Astrocyte of the cerebellum (primary cell): ENCODE measurements at regions of chr16 and their contacts with region 1.

Region 1: GRCh38 chr16:24820522-24820921 is 25.2 kb upstream of the SLC5A11 start:
- DNase-seq: no peak
- H3K4me3 ChIP-seq: no peak overlapping the region
- CTCF ChIP-seq: no peak

Region 2: DNA sequence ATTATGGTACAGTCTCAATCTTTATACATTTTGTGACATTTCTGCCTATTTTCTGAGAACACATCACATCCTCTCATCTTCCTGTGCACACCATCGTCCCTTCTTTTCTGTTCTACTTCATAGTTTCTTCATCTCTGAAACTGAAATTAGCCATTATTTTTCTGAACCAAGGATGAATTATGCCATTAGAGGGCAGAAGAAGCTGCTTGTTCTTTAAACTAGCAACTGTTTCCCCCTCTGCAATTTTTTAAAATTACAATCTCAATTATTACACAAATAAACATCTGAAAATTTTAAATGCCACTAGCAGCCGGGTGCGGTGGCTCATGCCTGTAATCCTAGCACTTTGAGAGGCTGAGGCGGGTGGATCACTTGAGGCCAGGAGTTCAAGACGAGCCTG is 239.9 kb before region 1 on chr16:
- in situ Hi-C with region 1: no loop called
- DNase-seq: peak; percentile 8
- H3K4me3 ChIP-seq: no peak overlapping the region
- CTCF ChIP-seq: peak; percentile 40

Region 3: DNA sequence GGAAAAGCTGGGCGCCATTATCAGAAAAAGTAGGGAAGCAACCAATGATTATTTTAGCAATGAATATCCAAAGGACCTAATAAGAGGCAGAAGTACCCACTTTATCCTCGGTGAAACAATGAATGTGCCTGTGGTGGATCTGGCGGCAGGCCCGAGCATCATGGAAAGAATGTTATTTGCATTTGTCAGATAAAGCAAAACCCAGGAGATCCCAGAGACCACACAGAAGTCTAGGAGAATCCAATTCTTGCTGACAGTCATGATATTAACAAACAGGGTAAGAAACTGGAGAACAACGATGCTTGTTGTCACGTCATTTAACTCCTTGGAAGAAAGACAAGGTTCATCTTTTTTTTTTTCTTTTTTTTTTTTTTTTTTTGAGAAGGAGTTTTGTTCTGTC is 103.1 kb before region 1 on chr16:
- in situ Hi-C with region 1: no loop called
- DNase-seq: peak; percentile 53
- H3K4me3 ChIP-seq: no peak overlapping the region
- CTCF ChIP-seq: no peak

Region 4: GRCh38 chr16:24896439-24896838 is 75.9 kb after region 1 on chr16:
- in situ Hi-C with region 1: no loop called
- DNase-seq: no peak
- H3K4me3 ChIP-seq: no peak overlapping the region
- CTCF ChIP-seq: no peak

Region 5: DNA sequence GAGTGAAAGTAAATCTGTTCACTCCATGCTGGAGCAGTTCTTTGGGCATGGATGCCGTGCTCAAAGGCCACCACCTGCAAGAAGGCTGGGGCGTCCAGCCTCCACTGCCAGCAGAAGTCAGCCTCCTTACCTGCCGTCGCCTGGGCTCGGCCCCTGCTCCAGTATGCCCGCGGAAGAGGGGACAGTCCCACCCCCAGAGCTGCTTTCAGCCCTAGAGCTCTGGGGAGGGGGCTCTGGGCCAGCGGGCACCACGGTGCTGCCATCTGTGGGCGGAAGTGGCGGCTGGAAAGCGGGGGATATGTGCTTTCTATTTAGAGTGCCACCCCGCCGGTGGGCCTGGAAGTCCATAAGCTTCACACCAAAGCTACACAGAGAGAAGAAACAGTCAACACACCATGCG is 118.7 kb after region 1 on chr16:
- in situ Hi-C with region 1: loop called (anchors 10 kb)
- DNase-seq: no peak
- H3K4me3 ChIP-seq: no peak overlapping the region
- CTCF ChIP-seq: no peak